ENCODE measurements at regions of chr4 and their contacts with region 1.

Region 1: GRCh38 chr4:25172961-25173915 is 13.0 kb upstream of the SEPSECS start:
- DNase-seq: peak in 4 of 5 donors; percentile 37 to 74 (median 56)
- ATAC-seq: peak; percentile 92 to 99 (median 97)
- H3K4me3 ChIP-seq: no peak overlapping the region
- H3K27ac ChIP-seq: peak overlapping the region in 11 of 12 donors; percentile 4 to 89 (median 72)
- H3K4me1 ChIP-seq: peaks cover 0 to 38% (median 16%) of the 10 kb centered on the region in 12 donors
- H3K27me3 ChIP-seq: no peaks in the 10 kb centered on the region
- CTCF ChIP-seq: no peak
- POLR2A ChIP-seq: no peak

Region 2: DNA sequence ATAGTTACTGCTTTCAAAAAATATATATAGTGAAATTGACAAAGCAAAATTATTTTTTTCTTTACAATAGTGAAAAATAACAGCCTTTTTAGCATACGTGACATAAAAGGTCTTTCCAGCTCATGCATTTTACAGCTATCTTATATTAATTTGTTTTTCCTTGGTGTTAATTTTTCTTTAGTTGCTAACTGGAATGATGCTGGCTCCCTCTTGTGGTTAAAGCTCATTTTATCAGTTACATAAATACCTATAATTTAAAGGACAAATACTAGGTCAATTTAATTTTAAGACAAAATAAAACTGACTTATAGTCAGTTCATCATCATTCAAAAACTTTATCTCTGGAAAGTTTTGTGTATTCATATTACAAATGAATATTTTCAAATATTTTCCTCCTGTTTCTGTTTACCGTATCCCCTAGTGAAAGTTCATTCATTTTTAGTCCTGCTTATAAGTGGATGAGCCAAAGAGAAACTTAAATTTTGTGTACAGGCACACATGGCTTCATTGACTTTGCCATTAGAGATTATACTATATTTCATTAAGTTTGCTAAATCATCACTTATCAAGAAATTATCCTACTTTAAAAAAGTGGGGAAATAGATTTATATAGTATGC is 193.9 kb after region 1 on chr4:
- intact Hi-C with region 1: loop called in 4 of 10 experiments (anchors 10 kb)
- DNase-seq: no peak
- ATAC-seq: no peak
- H3K4me3 ChIP-seq: no peak overlapping the region
- H3K27ac ChIP-seq: no peak overlapping the region
- H3K4me1 ChIP-seq: no peaks in the 10 kb centered on the region
- H3K27me3 ChIP-seq: no peaks in the 10 kb centered on the region
- CTCF ChIP-seq: peak; percentile 30 to 73 (median 60)
- POLR2A ChIP-seq: no peak

Region 3: GRCh38 chr4:25376754-25377571 is 203.7 kb after region 1 on chr4 and contains the start of gene ANAPC4:
- intact Hi-C with region 1: loop called in 1 of 10 experiments (anchors 10 kb)
- DNase-seq: peak; percentile 95 to 98 (median 97)
- ATAC-seq: peak; percentile 95 to 98 (median 98)
- H3K4me3 ChIP-seq: peak within 1 kb of the TSS; percentile 50 to 97 (median 94)
- H3K27ac ChIP-seq: peak within 1 kb of the TSS in 11 of 12 donors; percentile 54 to 86 (median 75)
- H3K4me1 ChIP-seq: peaks cover 0 to 32% (median 10%) of the 10 kb centered on the region in 12 donors
- H3K27me3 ChIP-seq: no peaks in the 10 kb centered on the region
- CTCF ChIP-seq: peak in 5 of 12 donors; percentile 10 to 24 (median 18)
- POLR2A ChIP-seq: peak in 1 of 2 donors; percentile 65
- total RNA-seq, gene ANAPC4: 6.7 to 15.5 (median 12.5) TPM